ENCODE measurements at regions of chr2 and their contacts with region 1.

Region 1: GRCh38 chr2:227163998-227164762 is at the starts of genes COL4A3 and COL4A4:
- DNase-seq: peak; percentile 58 to 78 (median 65)
- ATAC-seq: peak; percentile 84 to 93 (median 92)
- H3K4me3 ChIP-seq: peak within 1 kb of the TSS; percentile 56 to 85 (median 69)
- H3K27ac ChIP-seq: peak within 1 kb of the TSS; percentile 41 to 88 (median 76)
- H3K4me1 ChIP-seq: peaks cover 0 to 19% (median 5%) of the 10 kb centered on the region in 12 donors
- H3K27me3 ChIP-seq: peaks cover 0 to 35% (median 3%) of the 10 kb centered on the region in 9 donors
- CTCF ChIP-seq: no peak
- POLR2A ChIP-seq: peak in 1 of 2 donors; percentile 12
- total RNA-seq, gene COL4A3: 0.96 to 6.9 (median 1.9) TPM
- total RNA-seq, gene COL4A4: 1.6 to 9.9 (median 5.1) TPM

Region 2: GRCh38 chr2:226813148-226813701 is 351.0 kb before region 1 on chr2:
- intact Hi-C with region 1: no loop called
- DNase-seq: no peak
- ATAC-seq: no peak
- H3K4me3 ChIP-seq: no peak overlapping the region
- H3K27ac ChIP-seq: no peak overlapping the region
- H3K4me1 ChIP-seq: no peaks in the 10 kb centered on the region
- H3K27me3 ChIP-seq: peaks cover 0 to 3% (median 0%) of the 10 kb centered on the region in 9 donors
- CTCF ChIP-seq: peak in 3 of 12 donors; percentile 13 to 21 (median 20)
- POLR2A ChIP-seq: no peak

Region 3: DNA sequence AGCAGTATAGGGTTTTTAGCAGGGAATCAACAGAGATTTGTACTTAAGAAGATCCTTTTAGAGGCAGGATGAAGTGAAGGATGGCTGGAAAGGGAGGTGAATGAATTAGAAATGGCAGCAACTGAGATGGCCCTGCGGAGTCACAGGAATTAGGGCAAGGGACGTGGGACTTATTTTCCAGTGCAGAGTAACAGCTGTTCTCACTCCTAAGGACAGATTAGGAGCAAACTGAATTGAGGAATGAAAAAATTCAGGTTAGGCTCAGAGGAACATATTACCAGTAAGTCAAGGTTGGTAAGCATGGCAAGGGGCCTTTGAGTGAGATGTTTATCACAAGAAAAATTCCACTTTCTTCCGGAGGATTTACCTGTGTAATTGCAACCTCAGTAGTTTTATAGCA is 34.7 kb after region 1 on chr2:
- intact Hi-C with region 1: loop called in 1 of 10 experiments (anchors 5 kb)
- DNase-seq: no peak
- ATAC-seq: no peak
- H3K4me3 ChIP-seq: no peak overlapping the region
- H3K27ac ChIP-seq: no peak overlapping the region
- H3K4me1 ChIP-seq: peaks cover 0 to 4% (median 0%) of the 10 kb centered on the region in 12 donors
- H3K27me3 ChIP-seq: no peaks in the 10 kb centered on the region
- CTCF ChIP-seq: no peak
- POLR2A ChIP-seq: no peak

Measured in heart left ventricle (tissue), 16 donors.